Thyroid gland (tissue), 4 donors: ENCODE measurements at regions of chr17 and their contacts with region 1.

Region 1: GRCh38 chr17:49315551-49316257 is 46.3 kb downstream of the ZNF652 start:
- DNase-seq: peak; percentile 76 to 81
- H3K4me3 ChIP-seq: no peak overlapping the region
- H3K27ac ChIP-seq: no peak overlapping the region
- H3K4me1 ChIP-seq: peaks cover 0 to 5% of the 10 kb centered on the region in 2 donors
- H3K27me3 ChIP-seq: no peaks in the 10 kb centered on the region
- CTCF ChIP-seq: peak; percentile 53 to 99 (median 84)
- POLR2A ChIP-seq: no peak

Region 2: GRCh38 chr17:49210158-49211029 is 105.3 kb before region 1 on chr17 and contains the starts of genes ABI3 and GNGT2:
- intact Hi-C with region 1: no loop called
- DNase-seq: peak in 1 of 2 donors; percentile 20
- H3K4me3 ChIP-seq: peak within 1 kb of the TSS in 1 of 3 donors; percentile 25
- H3K27ac ChIP-seq: peak within 1 kb of the TSS in 2 of 3 donors; percentile 58 to 70
- H3K4me1 ChIP-seq: peaks cover 13 to 19% of the 10 kb centered on the region in 2 donors
- H3K27me3 ChIP-seq: no peaks in the 10 kb centered on the region
- CTCF ChIP-seq: no peak
- POLR2A ChIP-seq: no peak
- total RNA-seq, gene ABI3: 4.2 to 10.3 (median 6.2) TPM
- total RNA-seq, gene GNGT2: 1.5 to 4.2 (median 2.7) TPM

Region 3: DNA sequence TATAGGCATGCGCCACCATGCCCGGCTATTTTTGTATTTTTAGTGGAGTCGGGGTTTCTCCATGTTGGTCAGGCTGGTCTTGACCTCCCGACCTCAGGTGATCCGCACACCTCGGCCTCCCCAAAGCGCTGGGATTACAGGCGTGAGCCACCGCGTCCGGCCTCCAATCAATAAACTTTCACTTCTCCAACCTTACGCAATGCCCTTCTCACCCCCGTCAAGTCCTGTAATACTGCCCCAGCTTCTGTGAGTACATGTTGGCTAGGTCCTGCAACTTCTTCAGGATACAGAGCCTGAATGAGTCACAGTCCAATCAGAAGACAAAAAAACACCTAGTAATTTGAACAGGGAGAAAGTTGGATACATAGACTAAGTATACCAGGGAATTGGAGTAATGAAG is 38.1 kb before region 1 on chr17:
- intact Hi-C with region 1: no loop called
- DNase-seq: no peak
- H3K4me3 ChIP-seq: no peak overlapping the region
- H3K27ac ChIP-seq: no peak overlapping the region
- H3K4me1 ChIP-seq: no peaks in the 10 kb centered on the region
- H3K27me3 ChIP-seq: no peaks in the 10 kb centered on the region
- CTCF ChIP-seq: no peak
- POLR2A ChIP-seq: no peak

Region 4: GRCh38 chr17:49393491-49394255 is 78.0 kb after region 1 on chr17:
- intact Hi-C with region 1: loop called (anchors 2 kb)
- DNase-seq: no peak
- H3K4me3 ChIP-seq: no peak overlapping the region
- H3K27ac ChIP-seq: no peak overlapping the region
- H3K4me1 ChIP-seq: peaks cover 0 to 4% of the 10 kb centered on the region in 2 donors
- H3K27me3 ChIP-seq: no peaks in the 10 kb centered on the region
- CTCF ChIP-seq: no peak
- POLR2A ChIP-seq: no peak